ENCODE measurements at regions of chr1 and their contacts with region 1.

Region 1: GRCh38 chr1:159214149-159214760 is 9.6 kb downstream of the ACKR1 start:
- DNase-seq: peak; percentile 60
- CTCF ChIP-seq: peak; percentile 86

Region 2: DNA sequence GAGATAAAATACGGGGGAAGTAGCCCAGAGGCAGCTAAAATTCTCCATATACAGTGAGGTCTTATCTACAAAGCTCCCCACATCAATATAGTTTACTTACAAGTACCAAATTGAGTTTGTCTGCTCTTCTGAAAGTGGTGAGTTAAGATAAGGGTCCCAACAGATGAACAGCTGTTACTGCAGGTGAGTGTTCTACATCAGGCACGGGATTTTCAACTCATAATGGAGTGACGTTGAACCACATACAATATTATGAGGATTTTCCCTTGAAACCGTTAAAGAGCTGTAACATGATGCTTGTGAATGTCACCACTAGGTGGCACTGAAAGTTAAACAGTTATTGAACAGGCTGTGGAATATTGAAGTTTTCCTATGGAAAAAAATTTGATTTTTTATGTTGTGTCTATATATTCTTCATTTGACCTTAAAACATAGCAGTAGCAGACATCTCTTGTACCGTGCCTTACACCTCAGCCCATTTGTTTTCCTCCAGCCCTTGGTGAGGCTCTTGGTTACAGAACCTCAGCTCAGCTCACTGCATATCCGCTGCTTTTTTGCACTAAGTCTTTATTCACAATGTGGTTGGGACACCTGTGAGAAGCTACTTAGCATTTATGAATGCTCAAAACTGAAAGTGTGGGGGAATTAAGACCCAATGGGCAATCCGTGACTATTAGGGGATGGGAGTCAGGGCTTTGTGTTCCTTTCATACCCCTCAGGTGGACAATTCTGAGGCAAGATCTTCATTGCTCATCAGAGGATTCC is 1010.4 kb before region 1 on chr1:
- CTCF ChIA-PET with region 1: no interaction called
- POLR2A ChIA-PET with region 1: no interaction called
- DNase-seq: peak; percentile 35
- CTCF ChIP-seq: peak; percentile 74

Region 3: GRCh38 chr1:159056069-159056698 is 158.1 kb before region 1 on chr1:
- CTCF ChIA-PET with region 1: no interaction called
- POLR2A ChIA-PET with region 1: no interaction called
- DNase-seq: no peak
- CTCF ChIP-seq: peak; percentile 8

Region 4: DNA sequence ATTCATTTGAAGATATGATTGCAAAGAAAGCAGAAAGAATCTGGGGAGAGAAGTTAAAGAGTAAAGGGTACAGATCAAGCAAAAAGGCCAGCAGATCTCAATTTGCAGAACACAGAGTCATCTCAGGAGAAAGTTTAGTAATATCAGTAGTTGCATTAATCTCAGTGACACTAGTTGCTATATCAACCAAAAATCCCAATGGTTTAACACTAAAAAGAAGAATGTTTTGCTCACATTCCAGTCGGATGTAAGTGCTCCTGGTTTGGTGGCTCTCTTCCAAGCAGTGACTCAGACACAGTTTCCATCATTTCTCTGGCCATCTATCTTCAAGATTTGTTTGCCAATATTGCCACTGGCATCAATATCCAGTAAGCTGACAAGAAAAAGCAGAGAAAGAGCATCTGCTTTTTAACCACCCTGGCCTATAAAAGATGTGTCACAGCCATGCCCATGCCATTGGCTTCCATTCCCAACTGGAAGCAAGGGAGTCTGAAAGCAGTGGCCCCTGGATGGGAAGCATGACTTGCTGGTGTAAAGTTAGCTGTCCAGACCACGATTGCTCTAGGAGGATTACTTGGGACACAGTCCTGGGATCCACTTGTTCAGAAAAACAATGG is 92.1 kb before region 1 on chr1:
- CTCF ChIA-PET with region 1: interaction called, 12 read pairs
- POLR2A ChIA-PET with region 1: no interaction called
- DNase-seq: peak; percentile 36
- CTCF ChIP-seq: no peak

Region 5: GRCh38 chr1:159132271-159132881 is 81.9 kb before region 1 on chr1:
- CTCF ChIA-PET with region 1: interaction called, 180 read pairs
- POLR2A ChIA-PET with region 1: no interaction called
- DNase-seq: peak; percentile 59
- CTCF ChIP-seq: peak; percentile 83

Region 6: GRCh38 chr1:159161001-159161718 is 53.1 kb before region 1 on chr1:
- CTCF ChIA-PET with region 1: interaction called, 145 read pairs
- POLR2A ChIA-PET with region 1: no interaction called
- DNase-seq: peak; percentile 67
- CTCF ChIP-seq: peak; percentile 99

Region 7: GRCh38 chr1:159197561-159198557 is 16.4 kb before region 1 on chr1:
- CTCF ChIA-PET with region 1: interaction called, 139 read pairs
- POLR2A ChIA-PET with region 1: no interaction called
- DNase-seq: peak; percentile 59
- CTCF ChIP-seq: peak; percentile 76

Region 8: GRCh38 chr1:159229486-159229885 is 15.2 kb after region 1 on chr1:
- CTCF ChIA-PET with region 1: interaction called, 129 read pairs
- POLR2A ChIA-PET with region 1: no interaction called
- DNase-seq: no peak
- CTCF ChIP-seq: no peak